Vagina (tissue), 2 donors: ENCODE measurements at regions of chr10 and their contacts with region 1.

Region 1: DNA sequence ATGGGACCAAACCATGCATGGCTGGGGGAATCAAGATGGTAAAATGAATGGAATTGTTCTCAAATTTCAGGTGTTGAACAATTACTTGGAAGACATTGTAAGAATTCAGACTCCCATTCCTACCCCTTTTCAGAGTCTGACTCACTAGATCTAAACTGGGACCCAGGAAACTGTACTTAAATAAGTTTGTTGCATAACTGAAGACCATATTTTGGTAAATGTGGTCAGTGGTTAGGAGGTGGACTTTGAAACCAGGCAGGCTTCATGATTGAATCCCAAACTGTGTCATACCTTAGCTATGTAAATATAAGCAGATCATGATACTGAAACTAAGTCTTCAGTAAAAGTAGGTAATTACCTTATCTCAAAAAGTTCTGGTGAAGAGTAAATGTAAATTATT is 41.7 kb downstream of the ZWINT start:
- DNase-seq: no peak
- H3K4me3 ChIP-seq: no peak overlapping the region
- H3K27ac ChIP-seq: no peak overlapping the region
- H3K4me1 ChIP-seq: no peaks in the 10 kb centered on the region
- H3K27me3 ChIP-seq: no peaks in the 10 kb centered on the region
- CTCF ChIP-seq: no peak
- POLR2A ChIP-seq: no peak

Region 2: DNA sequence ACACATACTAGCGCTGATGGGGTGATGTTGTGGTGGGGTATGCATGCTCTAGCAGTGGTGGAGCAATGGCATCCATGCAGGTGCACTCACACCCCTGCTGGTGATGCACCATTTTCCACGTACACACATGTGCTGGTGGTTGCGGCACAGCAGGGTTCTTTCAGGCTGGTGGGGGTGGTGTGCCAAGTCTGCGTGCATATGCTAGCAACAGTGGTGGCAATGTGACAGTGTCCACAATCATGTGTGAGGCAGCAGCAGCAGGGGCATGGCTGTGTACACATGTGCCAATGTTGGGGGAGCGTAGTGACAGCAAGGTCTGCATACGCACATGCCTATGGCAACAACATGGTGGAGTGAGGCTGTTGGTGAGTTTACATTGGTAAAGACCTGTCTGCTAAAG is 106.4 kb before region 1 on chr10:
- intact Hi-C with region 1: no loop called
- DNase-seq: no peak
- H3K4me3 ChIP-seq: no peak overlapping the region
- H3K27ac ChIP-seq: no peak overlapping the region
- H3K4me1 ChIP-seq: no peaks in the 10 kb centered on the region
- H3K27me3 ChIP-seq: no peaks in the 10 kb centered on the region
- CTCF ChIP-seq: no peak
- POLR2A ChIP-seq: no peak

Region 3: GRCh38 chr10:58017719-58018367 is 1698.5 kb after region 1 on chr10:
- intact Hi-C with region 1: loop called (anchors 5 kb)
- DNase-seq: no peak
- H3K4me3 ChIP-seq: no peak overlapping the region
- H3K27ac ChIP-seq: no peak overlapping the region
- H3K4me1 ChIP-seq: no peaks in the 10 kb centered on the region
- H3K27me3 ChIP-seq: no peaks in the 10 kb centered on the region
- CTCF ChIP-seq: no peak
- POLR2A ChIP-seq: no peak